ENCODE measurements at regions of chr9 and their contacts with region 1.

Region 1: DNA sequence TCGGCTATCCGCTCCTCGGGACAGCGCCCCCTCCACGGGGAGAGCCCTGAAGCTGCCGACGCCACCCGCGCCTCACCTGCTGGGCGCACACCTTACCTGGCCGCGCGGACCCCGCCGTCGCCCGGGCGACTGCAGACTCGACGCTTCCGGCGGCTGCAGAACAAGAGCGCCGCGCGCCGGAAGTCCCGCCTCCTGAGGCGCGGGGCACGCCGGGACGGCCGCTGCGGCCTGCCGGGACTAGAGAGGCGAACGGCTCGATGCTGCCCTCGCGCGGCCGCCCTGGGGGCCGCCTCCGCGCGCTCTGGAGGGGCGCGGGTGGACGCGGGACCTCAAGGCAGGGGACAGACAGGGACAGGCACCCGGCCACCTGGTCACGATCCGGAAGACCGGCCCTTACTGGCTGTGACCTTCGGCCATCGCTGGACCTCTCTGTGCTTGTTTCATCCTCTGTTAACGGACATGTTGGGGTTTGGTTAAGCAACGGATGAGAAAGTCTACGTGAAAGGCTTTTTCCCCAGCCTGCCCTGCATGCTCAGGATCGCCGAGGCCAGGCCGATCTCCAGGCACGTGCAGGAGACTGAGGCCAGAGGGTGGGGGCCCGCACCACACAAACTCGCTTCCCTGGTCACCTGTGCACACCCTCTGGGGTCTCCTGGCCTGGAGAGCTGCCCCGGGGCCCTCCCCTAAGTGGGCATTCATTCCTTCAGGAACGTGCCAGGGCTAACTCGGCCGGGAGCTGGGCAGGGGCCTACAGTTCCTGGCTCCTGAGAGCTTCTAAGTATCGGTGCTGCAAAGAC is at the start of gene SNAPC4:
- DNase-seq: no peak
- H3K4me3 ChIP-seq: peak within 1 kb of the TSS; percentile 92 to 96
- H3K27ac ChIP-seq: peak within 1 kb of the TSS; percentile 31
- H3K4me1 ChIP-seq: peaks cover 21% of the 10 kb centered on the region
- H3K27me3 ChIP-seq: no peaks in the 10 kb centered on the region
- CTCF ChIP-seq: peak; percentile 75 to 100 (median 90)
- POLR2A ChIP-seq: no peak
- total RNA-seq, gene SNAPC4: 3.2 TPM

Region 2: DNA sequence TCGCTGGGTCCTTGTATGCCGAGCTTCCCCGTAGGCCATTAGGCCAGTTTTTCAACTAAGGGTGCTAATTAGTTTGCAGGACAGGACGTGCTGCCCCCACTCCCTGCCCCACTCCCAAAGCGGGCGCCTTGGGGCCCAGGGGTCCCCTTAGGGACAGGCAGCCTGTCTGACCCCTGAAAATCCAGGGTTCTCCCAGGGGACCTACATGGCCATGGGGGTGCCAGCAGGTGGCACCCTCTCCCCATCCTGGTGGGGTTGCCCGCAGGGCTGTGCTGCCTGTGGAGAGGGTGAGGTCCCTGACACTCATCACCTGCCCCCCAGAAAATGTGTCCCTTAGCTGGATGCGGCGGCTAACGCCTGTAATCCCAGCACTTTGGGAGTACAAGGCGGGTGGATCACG is 87.8 kb before region 1 on chr9:
- intact Hi-C with region 1: loop called (anchors 10 kb)
- DNase-seq: no peak
- H3K4me3 ChIP-seq: no peak overlapping the region
- H3K27ac ChIP-seq: no peak overlapping the region
- H3K4me1 ChIP-seq: no peaks in the 10 kb centered on the region
- H3K27me3 ChIP-seq: no peaks in the 10 kb centered on the region
- CTCF ChIP-seq: peak in 2 of 3 experiments; percentile 51 to 61
- POLR2A ChIP-seq: no peak

Measured in vagina (tissue), 2 donors.